H1 (cell line): ENCODE measurements at regions of chr11 and their contacts with region 1.

Region 1: GRCh38 chr11:66328307-66329144 is 7.7 kb downstream of the RIN1 start:
- DNase-seq: peak; percentile 76 to 94
- H3K4me3 ChIP-seq: peak overlapping the region in 3 of 4 experiments; percentile 4 to 38 (median 11); a peak in 3 of 8 replicates
- H3K27ac ChIP-seq: no peak overlapping the region
- H3K4me1 ChIP-seq: peaks cover 5 to 13% (median 8%) of the 10 kb centered on the region in 4 experiments; a peak in 6 of 7 replicates
- H3K27me3 ChIP-seq: peaks cover 0 to 7% (median 5%) of the 10 kb centered on the region in 4 experiments; a peak in 2 of 7 replicates
- CTCF ChIP-seq: peak; percentile 95 to 98 (median 97)
- EP300 ChIP-seq: no peak
- POLR2A ChIP-seq: no peak; a peak in 1 of 3 replicates
- RAD21 ChIP-seq: peak; percentile 73 to 82

Region 2: GRCh38 chr11:66317723-66318599 is 10.6 kb before region 1 on chr11:
- CTCF ChIA-PET with region 1: interaction called, 242 read pairs
- POLR2A ChIA-PET with region 1: interaction called, 25 read pairs
- DNase-seq: no peak
- H3K4me3 ChIP-seq: peak overlapping the region in 1 of 4 experiments; percentile 40; a peak in 1 of 8 replicates
- H3K27ac ChIP-seq: peak overlapping the region; percentile 32; the same call in 1 of the 2 replicates
- H3K4me1 ChIP-seq: peaks cover 9 to 28% (median 19%) of the 10 kb centered on the region in 4 experiments
- H3K27me3 ChIP-seq: peaks cover 0 to 5% (median 0%) of the 10 kb centered on the region in 4 experiments; a peak in 3 of 7 replicates
- CTCF ChIP-seq: no peak
- EP300 ChIP-seq: no peak
- POLR2A ChIP-seq: no peak
- RAD21 ChIP-seq: no peak